CD4-positive, alpha-beta memory T cell (primary cell): ENCODE measurements at regions of chr5 and their contacts with region 1.

Region 1: DNA sequence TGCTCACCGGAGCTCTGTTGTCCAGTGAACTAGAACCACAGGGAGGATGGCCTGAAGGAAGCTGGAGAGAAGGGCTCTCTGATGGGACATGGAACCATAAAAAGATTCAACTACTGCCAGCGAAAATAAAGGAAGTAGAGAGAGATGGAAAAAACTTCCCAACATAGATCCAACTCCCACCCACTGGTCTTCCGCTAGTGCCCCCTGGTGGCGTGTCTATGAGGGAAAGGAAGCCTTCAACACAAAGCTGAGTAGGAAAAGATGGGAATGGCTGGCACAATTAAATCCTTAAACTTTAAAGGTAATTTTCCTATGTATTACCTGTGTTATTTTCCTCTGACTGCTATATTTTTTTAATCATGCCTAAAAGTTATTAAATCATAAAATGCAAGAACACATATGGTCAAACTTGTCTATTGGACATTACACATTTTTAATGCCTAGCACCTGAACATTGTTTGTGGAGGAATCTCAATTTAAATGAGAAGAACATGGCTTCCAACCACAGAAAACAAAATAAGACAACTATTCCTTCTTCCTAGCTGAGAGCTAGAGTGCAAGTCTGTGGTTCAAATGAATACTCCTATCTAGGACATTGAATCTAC is 51.5 kb downstream of the CEP120 start:
- DNase-seq: peak in 3 of 5 donors; percentile 1 to 14 (median 5)
- H3K4me3 ChIP-seq: no peak overlapping the region
- H3K4me3 Mint-ChIP-seq: no peak overlapping the region
- H3K27ac ChIP-seq: no peak overlapping the region
- H3K27ac Mint-ChIP-seq: no peak overlapping the region
- H3K4me1 ChIP-seq: no peaks in the 10 kb centered on the region
- H3K4me1 Mint-ChIP-seq: peaks cover 2 to 9% (median 5%) of the 10 kb centered on the region in 4 donors
- H3K27me3 ChIP-seq: no peaks in the 10 kb centered on the region
- H3K27me3 Mint-ChIP-seq: no peaks in the 10 kb centered on the region

Region 2: GRCh38 chr5:122896598-122897282 is 474.9 kb before region 1 on chr5:
- CTCF ChIA-PET with region 1: interaction called, 5 read pairs
- POLR2A ChIA-PET with region 1: no interaction called
- intact Hi-C with region 1: loop called (anchors 5 kb)
- DNase-seq: no peak
- H3K4me3 ChIP-seq: no peak overlapping the region
- H3K4me3 Mint-ChIP-seq: no peak overlapping the region
- H3K27ac ChIP-seq: no peak overlapping the region
- H3K27ac Mint-ChIP-seq: no peak overlapping the region
- H3K4me1 ChIP-seq: peaks cover 3% of the 10 kb centered on the region
- H3K4me1 Mint-ChIP-seq: peaks cover 2 to 8% (median 3%) of the 10 kb centered on the region in 4 donors
- H3K27me3 ChIP-seq: no peaks in the 10 kb centered on the region
- H3K27me3 Mint-ChIP-seq: no peaks in the 10 kb centered on the region

Region 3: DNA sequence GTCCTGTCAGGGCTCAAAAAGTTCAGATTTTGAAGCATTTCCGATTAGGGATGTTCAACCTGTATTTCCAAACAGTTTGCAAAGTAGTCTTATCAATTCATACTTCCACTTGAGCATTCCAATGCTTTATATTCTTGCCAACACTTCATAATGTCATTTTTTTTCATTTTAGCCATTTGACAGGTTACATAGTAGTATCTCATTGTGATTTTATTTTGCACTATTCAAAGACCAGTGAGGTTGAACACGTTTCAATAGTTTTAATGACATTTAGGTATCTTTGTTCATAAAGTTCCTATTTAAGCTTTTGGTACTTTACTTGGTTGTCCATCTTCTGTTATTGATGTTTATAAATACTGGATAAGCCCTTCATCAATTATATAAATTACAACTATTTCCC is 19.9 kb before region 1 on chr5:
- CTCF ChIA-PET with region 1: interaction called, 10 read pairs
- POLR2A ChIA-PET with region 1: no interaction called
- intact Hi-C with region 1: no loop called
- DNase-seq: no peak
- H3K4me3 ChIP-seq: no peak overlapping the region
- H3K4me3 Mint-ChIP-seq: no peak overlapping the region
- H3K27ac ChIP-seq: no peak overlapping the region
- H3K27ac Mint-ChIP-seq: peak overlapping the region in 1 of 7 donors; percentile 42
- H3K4me1 ChIP-seq: no peaks in the 10 kb centered on the region
- H3K4me1 Mint-ChIP-seq: peaks cover 0 to 2% (median 0%) of the 10 kb centered on the region in 4 donors
- H3K27me3 ChIP-seq: no peaks in the 10 kb centered on the region
- H3K27me3 Mint-ChIP-seq: no peaks in the 10 kb centered on the region

Region 4: GRCh38 chr5:123610665-123611405 is 239.2 kb after region 1 on chr5:
- CTCF ChIA-PET with region 1: interaction called, 6 read pairs
- POLR2A ChIA-PET with region 1: no interaction called
- intact Hi-C with region 1: loop called (anchors 1 kb)
- DNase-seq: peak; percentile 47 to 60 (median 56)
- H3K4me3 ChIP-seq: no peak overlapping the region
- H3K4me3 Mint-ChIP-seq: no peak overlapping the region
- H3K27ac ChIP-seq: no peak overlapping the region
- H3K27ac Mint-ChIP-seq: peak overlapping the region in 4 of 7 donors; percentile 58 to 90 (median 90)
- H3K4me1 ChIP-seq: no peaks in the 10 kb centered on the region
- H3K4me1 Mint-ChIP-seq: peaks cover 0 to 6% (median 2%) of the 10 kb centered on the region in 4 donors
- H3K27me3 ChIP-seq: no peaks in the 10 kb centered on the region
- H3K27me3 Mint-ChIP-seq: no peaks in the 10 kb centered on the region